ENCODE measurements at regions of chr6 and their contacts with region 1.

Region 1: DNA sequence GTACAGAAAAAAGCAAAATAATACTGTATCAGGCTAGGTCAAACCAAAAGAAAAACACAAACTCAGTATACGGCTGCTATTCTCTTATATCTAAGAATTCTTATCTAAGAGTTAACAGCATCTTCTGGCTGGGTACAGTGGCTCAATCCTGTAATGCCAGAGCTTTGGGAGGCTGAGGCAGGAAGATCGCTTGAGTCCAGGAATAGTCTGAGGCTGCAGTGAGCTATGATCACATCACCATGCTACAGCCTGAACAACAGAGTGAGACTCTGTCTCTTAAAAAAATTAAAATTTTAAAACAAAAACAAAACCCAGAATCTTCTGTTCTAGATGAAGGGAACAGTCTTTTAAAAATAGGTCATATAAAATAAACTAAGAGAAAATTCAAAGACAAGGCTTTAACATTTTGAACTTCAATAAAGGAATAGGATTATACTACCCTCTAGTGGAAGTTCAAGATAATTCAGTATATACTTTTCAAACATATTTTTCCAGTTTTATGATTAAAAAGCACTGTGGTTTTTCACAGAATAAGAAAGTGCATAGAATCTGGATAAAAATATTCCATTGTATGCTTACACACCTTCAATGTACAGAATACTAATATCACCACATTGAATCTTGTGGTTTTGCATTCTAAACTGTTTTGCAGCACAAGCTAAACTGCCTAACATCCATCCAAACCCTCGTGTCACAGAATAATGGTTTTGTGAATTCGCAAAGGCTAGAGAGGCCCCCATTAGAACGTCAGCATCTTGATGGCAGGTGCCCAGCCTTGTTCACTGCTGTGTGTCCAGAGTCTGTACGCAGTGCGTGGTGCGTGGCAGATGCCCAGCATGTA is 39.3 kb downstream of the DTNBP1 start:
- DNase-seq: peak in 1 of 2 experiments; percentile 3
- ATAC-seq: no peak
- H3K4me3 ChIP-seq: no peak overlapping the region
- H3K27ac ChIP-seq: no peak overlapping the region
- H3K4me1 ChIP-seq: no peaks in the 10 kb centered on the region
- CTCF ChIP-seq: peak; percentile 56; the same call in 2 of the 3 replicates
- EP300 ChIP-seq: no peak
- POLR2A ChIP-seq: no peak
- RAD21 ChIP-seq: peak; percentile 49 to 72; a peak in 4 of 5 replicates

Region 2: DNA sequence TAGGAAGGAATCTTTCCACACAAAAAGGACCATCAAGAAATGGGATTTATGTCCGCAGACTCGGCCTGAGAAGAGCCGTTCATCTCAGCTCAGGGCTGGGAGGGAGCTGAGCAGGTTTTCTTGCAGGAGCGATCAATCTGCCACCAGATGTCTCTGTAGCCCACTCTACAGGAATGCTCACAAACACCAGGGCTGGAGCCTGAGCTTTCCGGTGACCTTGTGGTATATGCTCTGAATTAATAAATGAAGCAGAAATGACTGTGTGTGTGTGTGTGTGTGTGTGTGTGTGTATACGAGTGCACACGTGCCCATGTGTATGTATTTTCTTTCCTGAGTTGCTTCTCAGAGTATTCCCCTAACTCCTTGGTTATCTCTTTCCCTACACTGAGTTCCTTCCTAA is 1493.9 kb before region 1 on chr6:
- CTCF ChIA-PET with region 1: interaction called, 16 read pairs
- POLR2A ChIA-PET with region 1: no interaction called
- DNase-seq: peak; percentile 51 to 58
- ATAC-seq: peak; percentile 90 to 96
- H3K4me3 ChIP-seq: no peak overlapping the region
- H3K27ac ChIP-seq: 0 out of 6 replicates have a peak overlapping the region, but pooled peaks of 1 of the 2 experiments have one; percentile 6
- H3K4me1 ChIP-seq: no peaks in the 10 kb centered on the region
- CTCF ChIP-seq: peak; percentile 58
- EP300 ChIP-seq: no peak
- POLR2A ChIP-seq: no peak
- RAD21 ChIP-seq: peak; percentile 71 to 78

Region 3: DNA sequence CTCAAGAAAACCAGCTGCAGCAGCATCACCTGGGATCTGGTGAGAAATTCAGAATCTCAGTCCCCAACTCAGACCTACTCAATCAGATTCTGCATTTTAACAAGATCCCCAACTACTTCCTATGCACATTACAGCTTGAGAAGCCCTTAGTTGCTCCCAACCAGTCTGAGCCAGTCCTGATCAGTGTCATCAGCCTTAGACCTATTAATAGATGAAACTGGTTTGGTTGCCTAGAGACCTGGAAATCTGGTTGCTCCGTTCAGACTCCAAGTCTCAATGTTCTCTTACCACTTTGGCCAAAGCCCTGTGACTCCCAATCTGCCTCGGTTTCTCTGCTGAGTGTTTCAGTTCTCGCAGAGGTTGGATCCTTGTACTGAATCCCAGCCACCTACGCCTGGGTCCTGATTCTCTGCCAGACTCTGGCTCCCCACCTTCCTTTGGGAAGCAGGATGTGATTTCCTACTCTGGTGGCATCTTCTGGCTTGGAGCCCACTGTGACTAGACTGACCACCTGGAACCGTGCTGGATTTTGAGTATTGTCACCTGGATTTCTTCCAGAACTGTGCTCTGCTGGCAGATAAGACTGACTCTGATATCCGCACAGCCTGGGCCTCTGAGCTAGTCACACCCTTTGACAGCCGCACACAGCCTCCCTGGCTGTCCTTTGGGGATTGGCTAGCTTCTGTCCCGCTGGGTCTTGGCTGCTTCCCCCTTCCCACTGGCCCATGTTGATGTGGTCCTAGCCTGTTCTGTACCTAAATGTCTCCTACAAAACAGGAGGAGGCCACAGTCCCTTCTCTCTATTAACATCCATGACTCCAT is 1158.1 kb after region 1 on chr6:
- CTCF ChIA-PET with region 1: no interaction called
- POLR2A ChIA-PET with region 1: no interaction called
- DNase-seq: no peak
- ATAC-seq: no peak
- H3K4me3 ChIP-seq: no peak overlapping the region
- H3K27ac ChIP-seq: no peak overlapping the region
- H3K4me1 ChIP-seq: no peaks in the 10 kb centered on the region
- CTCF ChIP-seq: no peak
- EP300 ChIP-seq: no peak
- POLR2A ChIP-seq: no peak
- RAD21 ChIP-seq: no peak